HCT116 (cell line): ENCODE measurements at regions of chr17 and their contacts with region 1.

Region 1: GRCh38 chr17:67221062-67221998 is 23.7 kb downstream of the HELZ start:
- DNase-seq: peak; percentile 40
- ATAC-seq: peak; percentile 92
- H3K4me3 ChIP-seq: no peak overlapping the region
- H3K27ac ChIP-seq: no peak overlapping the region
- H3K4me1 ChIP-seq: peaks cover 0 to 16% of the 10 kb centered on the region in 2 experiments; a peak in 2 of 4 replicates
- H3K27me3 ChIP-seq: no peaks in the 10 kb centered on the region
- CTCF ChIP-seq: peak; percentile 68 to 95 (median 87); a peak in 5 of 6 replicates
- POLR2A ChIP-seq: no peak
- RAD21 ChIP-seq: peak; percentile 77

Region 2: GRCh38 chr17:66944351-66945139 is 276.8 kb before region 1 on chr17:
- CTCF ChIA-PET with region 1: no interaction called
- POLR2A ChIA-PET with region 1: no interaction called
- RAD21 ChIA-PET with region 1: no interaction called
- intact Hi-C with region 1: no loop called
- DNase-seq: no peak
- ATAC-seq: no peak; the same call in 1 of the 2 replicates
- H3K4me3 ChIP-seq: no peak overlapping the region
- H3K27ac ChIP-seq: no peak overlapping the region
- H3K4me1 ChIP-seq: peaks cover 0 to 16% of the 10 kb centered on the region in 2 experiments; a peak in 1 of 4 replicates
- H3K27me3 ChIP-seq: no peaks in the 10 kb centered on the region
- CTCF ChIP-seq: no peak
- POLR2A ChIP-seq: no peak
- RAD21 ChIP-seq: no peak

Region 3: DNA sequence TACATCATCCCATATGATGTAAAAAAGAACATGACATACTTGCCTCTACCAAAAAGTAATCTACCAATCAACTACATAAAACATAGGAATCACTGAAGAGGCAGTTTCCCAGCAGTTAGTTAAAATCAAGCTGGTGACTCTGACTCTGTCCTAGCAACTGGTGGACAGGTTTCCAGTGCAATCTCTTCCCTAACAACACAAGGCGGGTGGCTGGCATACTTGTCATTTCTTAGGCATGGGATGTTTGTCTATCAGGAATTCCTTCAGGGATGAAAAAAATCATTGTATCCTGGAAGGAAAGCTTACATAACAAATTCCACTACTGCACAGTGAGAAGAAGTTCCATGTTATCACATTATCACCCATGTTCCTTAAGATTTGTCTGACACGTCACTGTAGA is 27.2 kb before region 1 on chr17:
- CTCF ChIA-PET with region 1: interaction called, 10 read pairs
- POLR2A ChIA-PET with region 1: no interaction called
- RAD21 ChIA-PET with region 1: no interaction called
- intact Hi-C with region 1: no loop called
- DNase-seq: no peak
- ATAC-seq: no peak
- H3K4me3 ChIP-seq: no peak overlapping the region
- H3K27ac ChIP-seq: no peak overlapping the region
- H3K4me1 ChIP-seq: no peaks in the 10 kb centered on the region
- H3K27me3 ChIP-seq: no peaks in the 10 kb centered on the region
- CTCF ChIP-seq: no peak
- POLR2A ChIP-seq: no peak
- RAD21 ChIP-seq: no peak

Region 4: DNA sequence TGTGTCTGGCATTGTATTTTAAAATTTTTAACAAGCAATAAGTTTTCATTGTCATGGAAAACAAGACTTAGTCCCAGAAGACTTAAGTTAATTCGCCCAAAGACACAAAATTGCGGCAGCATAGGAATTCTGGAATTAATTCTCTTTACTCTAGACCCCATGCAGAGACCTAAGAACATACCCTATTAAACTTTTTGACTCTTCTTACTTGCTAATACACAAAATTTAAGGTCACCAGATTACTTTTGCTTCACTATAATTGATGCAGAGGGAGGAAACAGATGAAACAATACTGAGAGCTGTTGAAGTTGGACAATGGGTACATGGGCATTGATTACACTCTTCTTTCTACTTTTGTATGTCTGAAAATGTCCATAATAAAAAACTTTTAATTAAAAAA is 11.1 kb after region 1 on chr17:
- CTCF ChIA-PET with region 1: interaction called, 21 read pairs
- POLR2A ChIA-PET with region 1: no interaction called
- RAD21 ChIA-PET with region 1: no interaction called
- intact Hi-C with region 1: no loop called
- DNase-seq: no peak
- ATAC-seq: no peak
- H3K4me3 ChIP-seq: no peak overlapping the region
- H3K27ac ChIP-seq: no peak overlapping the region
- H3K4me1 ChIP-seq: no peaks in the 10 kb centered on the region
- H3K27me3 ChIP-seq: no peaks in the 10 kb centered on the region
- CTCF ChIP-seq: no peak
- POLR2A ChIP-seq: no peak
- RAD21 ChIP-seq: no peak

Region 5: DNA sequence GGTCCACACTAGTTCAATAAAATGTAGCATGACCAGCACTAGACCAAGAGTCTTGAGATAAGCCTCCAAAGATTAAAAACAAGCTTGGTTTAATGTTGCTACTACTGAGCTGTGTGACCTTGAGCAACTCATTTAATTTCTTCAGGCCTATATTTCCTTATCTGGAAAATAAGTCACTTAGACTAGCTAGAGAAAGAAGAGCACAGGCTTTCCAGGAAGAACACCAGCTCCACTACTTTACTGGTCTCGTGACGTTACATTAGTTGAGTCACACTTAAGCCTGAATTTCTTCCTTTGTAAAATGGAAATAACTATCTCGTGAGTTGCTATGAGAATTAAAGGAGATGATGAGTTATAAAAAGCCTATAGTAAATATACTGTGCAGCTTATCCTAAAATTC is 18.3 kb after region 1 on chr17:
- CTCF ChIA-PET with region 1: interaction called, 21 read pairs
- POLR2A ChIA-PET with region 1: no interaction called
- RAD21 ChIA-PET with region 1: no interaction called
- intact Hi-C with region 1: no loop called
- DNase-seq: no peak
- ATAC-seq: no peak
- H3K4me3 ChIP-seq: no peak overlapping the region
- H3K27ac ChIP-seq: no peak overlapping the region
- H3K4me1 ChIP-seq: peaks cover 7 to 12% of the 10 kb centered on the region in 2 experiments; a peak in 3 of 4 replicates
- H3K27me3 ChIP-seq: no peaks in the 10 kb centered on the region
- CTCF ChIP-seq: no peak
- POLR2A ChIP-seq: no peak
- RAD21 ChIP-seq: no peak

Region 6: GRCh38 chr17:67272312-67273050 is 51.2 kb after region 1 on chr17:
- CTCF ChIA-PET with region 1: interaction called, 19 read pairs
- POLR2A ChIA-PET with region 1: no interaction called
- RAD21 ChIA-PET with region 1: no interaction called
- intact Hi-C with region 1: no loop called
- DNase-seq: no peak
- ATAC-seq: peak; percentile 80
- H3K4me3 ChIP-seq: no peak overlapping the region
- H3K27ac ChIP-seq: no peak overlapping the region
- H3K4me1 ChIP-seq: no peaks in the 10 kb centered on the region
- H3K27me3 ChIP-seq: no peaks in the 10 kb centered on the region
- CTCF ChIP-seq: peak; percentile 18 to 59 (median 58); a peak in 5 of 6 replicates
- POLR2A ChIP-seq: no peak
- RAD21 ChIP-seq: no peak

Region 7: DNA sequence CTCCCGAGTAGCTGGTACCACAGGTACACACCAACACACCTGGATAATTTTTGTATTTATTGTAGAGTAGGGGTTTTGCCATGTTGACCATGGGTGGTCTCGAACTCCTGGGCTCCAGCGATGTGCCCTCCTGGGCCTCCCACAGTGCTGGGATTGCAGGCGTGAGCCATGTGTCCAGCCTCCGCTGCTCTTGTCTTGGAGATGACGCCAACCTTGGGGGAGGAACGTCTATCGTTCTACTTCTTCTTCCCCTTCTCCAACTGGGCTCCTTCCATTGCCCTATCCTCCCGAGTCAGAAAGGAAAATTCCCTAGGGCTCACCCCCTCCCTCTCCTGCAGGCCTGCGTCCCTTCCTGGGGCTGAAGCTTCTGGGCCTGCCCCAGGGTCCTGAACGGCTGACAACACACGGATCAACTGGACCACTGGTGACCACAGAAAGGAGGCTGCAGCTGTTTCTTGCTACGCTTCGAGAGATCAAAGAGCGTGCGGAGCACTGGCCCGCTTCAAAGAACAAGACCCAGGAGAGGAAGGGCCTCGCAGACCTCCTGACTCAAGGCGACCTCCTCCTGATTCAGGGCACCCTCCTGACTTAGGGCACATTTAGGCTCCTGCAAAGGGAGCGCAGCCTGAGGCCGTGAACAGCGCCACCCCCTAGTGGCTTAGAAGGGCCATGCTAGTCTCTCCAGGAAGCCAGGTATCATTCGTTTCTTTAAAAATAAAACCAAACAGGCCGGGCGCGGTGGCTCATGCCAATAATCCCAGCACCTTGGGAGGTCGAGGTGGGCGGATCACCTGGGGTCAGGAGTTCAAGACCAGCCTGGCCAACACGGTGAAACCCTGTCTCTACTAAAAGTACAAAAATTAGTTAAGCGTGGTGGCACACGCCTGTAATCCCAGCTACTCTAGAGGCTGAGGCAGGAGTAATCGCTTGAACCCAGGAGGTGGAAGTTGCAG is 72.2 kb after region 1 on chr17:
- CTCF ChIA-PET with region 1: interaction called, 9 read pairs
- POLR2A ChIA-PET with region 1: no interaction called
- RAD21 ChIA-PET with region 1: interaction called in 1 of 2 experiments, 5 read pairs
- intact Hi-C with region 1: loop called (anchors 1 kb)
- DNase-seq: peak; percentile 69
- ATAC-seq: peak; percentile 99
- H3K4me3 ChIP-seq: no peak overlapping the region
- H3K27ac ChIP-seq: no peak overlapping the region
- H3K4me1 ChIP-seq: peaks cover 0 to 6% of the 10 kb centered on the region in 2 experiments; a peak in 2 of 4 replicates
- H3K27me3 ChIP-seq: no peaks in the 10 kb centered on the region
- CTCF ChIP-seq: peak; percentile 89 to 98 (median 91)
- POLR2A ChIP-seq: no peak
- RAD21 ChIP-seq: peak; percentile 91

Region 8: DNA sequence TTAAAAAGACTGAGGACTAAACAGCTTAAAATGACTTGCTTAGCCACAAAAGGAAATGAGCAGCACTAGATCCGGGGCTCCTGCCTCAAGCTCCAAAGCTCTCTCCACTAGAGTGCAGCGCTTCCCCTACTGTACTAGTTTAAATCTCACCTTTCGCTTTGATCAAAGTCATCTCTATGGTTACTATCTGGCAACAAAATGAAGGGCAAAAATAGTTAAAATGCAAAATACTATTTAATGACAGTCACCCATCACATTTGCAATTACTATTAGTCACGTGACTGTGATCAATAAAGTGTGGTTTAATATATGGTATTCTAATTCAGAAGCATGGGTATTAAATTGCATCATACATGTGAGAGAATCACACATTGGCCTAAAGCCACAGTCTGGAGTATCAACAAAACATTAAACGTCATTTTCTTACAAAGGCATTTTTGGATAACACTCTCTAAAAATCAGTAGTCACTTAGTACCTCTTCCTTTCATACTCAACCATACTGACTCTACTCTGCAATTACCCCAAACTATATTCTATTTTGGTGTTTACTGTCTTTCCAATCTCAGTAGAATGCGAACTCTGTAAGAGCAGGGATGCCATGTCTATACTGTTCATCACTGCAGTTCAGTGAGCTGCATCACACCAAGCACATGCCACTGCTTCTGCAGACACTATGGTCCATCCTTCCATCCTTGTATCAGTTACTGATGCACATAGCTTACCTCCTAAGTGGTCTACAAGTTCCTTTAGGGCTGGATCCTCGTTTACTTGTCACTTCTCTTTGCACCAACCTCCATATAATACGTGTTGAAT is 138.8 kb after region 1 on chr17:
- CTCF ChIA-PET with region 1: interaction called, 12 read pairs
- POLR2A ChIA-PET with region 1: no interaction called
- RAD21 ChIA-PET with region 1: interaction called in 1 of 2 experiments, 4 read pairs
- intact Hi-C with region 1: no loop called
- DNase-seq: peak; percentile 46
- ATAC-seq: peak; percentile 89
- H3K4me3 ChIP-seq: no peak overlapping the region
- H3K27ac ChIP-seq: no peak overlapping the region
- H3K4me1 ChIP-seq: peaks cover 7 to 10% of the 10 kb centered on the region in 2 experiments; a peak in 3 of 4 replicates
- H3K27me3 ChIP-seq: no peaks in the 10 kb centered on the region
- CTCF ChIP-seq: peak; percentile 41 to 75 (median 65); a peak in 5 of 6 replicates
- POLR2A ChIP-seq: no peak
- RAD21 ChIP-seq: peak; percentile 47; the same call in 1 of the 2 replicates